ENCODE measurements at regions of chr14 and their contacts with region 1.

Region 1: DNA sequence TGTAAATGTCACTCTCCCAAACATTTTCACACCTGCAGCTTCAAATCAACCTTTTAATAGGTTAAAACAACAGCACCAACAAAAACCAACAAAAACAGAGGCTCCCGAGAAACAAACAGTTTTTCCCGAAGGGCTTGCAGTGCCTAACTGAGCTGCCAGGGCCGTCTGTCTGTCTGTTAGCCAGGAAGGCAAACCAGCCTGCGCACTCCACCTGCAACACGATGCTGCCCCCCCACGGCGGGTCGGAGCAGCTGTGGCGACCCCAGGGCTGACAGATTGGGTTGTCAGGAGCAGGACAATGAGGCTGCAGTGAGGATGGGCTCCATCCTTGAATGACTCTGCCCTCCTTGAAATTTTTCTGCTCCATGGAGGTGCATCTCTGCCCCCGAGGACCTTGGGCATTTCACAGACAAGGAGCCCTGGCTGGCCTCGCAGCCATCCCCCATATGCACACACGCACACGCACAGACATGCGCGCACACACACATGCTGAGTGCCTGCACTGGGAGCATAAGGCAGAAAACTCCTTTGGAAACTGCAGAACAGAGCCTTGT is 2.6 kb downstream of the RTL1 start:
- DNase-seq: peak; percentile 54
- ATAC-seq: no peak
- H3K4me3 Mint-ChIP-seq: no peak overlapping the region
- H3K27ac Mint-ChIP-seq: no peak overlapping the region
- H3K4me1 Mint-ChIP-seq: no peaks in the 10 kb centered on the region
- H3K27me3 Mint-ChIP-seq: peaks cover 48% of the 10 kb centered on the region

Region 2: DNA sequence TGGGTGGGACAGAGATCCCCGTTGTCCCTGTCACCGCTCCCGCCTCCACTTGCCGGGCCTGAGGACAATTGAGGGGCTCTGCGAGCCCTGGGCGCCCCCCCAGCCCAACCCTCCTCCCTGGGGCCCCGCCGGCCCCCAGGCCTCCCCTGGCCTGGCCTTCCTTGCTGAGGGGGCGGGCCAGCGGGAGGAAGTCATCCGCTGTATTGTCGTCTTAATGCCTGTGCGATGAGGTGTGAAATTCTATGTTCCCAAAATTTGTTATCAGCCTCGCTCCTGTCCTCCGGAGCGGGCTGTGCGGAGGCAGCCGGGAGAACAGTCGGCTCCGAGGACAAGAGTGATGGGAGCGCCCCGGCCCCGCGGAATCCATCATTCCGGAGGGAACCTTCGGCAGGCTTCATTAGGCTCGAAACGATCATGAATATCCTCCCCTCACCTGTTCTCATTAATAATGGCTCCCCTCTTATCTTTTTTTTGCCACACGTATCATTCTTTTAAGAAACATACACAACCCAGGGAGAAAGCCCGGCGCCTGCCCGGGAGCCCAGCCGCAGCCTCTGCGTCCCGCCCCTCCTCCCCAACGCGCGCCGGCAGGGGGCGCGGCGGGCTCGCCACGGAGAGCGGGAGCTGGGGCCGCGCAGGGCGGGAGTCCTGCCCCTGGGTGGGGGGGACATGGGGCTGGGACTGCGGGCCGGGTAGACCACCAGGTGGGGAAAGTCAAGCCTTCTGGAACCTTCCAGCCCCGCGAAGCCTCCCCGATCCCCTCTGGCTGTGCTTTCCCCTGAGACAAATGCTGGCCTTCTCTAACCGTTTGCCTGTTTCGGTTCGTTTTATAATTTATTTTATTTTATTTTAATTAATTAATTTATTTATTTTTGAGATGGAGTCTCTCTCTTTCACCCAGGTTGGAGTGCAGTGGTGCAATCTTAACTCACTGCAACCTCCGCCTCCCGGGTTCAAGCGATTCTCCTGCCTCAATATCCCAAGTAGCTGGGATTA is 191.3 kb before region 1 on chr14:
- CTCF ChIA-PET with region 1: no interaction called
- POLR2A ChIA-PET with region 1: no interaction called
- intact Hi-C with region 1: loop called in 1 of 2 experiments (anchors 1 kb)
- DNase-seq: peak; percentile 63
- ATAC-seq: no peak
- H3K4me3 Mint-ChIP-seq: no peak overlapping the region
- H3K27ac Mint-ChIP-seq: no peak overlapping the region
- H3K4me1 Mint-ChIP-seq: no peaks in the 10 kb centered on the region
- H3K27me3 Mint-ChIP-seq: peaks cover 16% of the 10 kb centered on the region

Region 3: DNA sequence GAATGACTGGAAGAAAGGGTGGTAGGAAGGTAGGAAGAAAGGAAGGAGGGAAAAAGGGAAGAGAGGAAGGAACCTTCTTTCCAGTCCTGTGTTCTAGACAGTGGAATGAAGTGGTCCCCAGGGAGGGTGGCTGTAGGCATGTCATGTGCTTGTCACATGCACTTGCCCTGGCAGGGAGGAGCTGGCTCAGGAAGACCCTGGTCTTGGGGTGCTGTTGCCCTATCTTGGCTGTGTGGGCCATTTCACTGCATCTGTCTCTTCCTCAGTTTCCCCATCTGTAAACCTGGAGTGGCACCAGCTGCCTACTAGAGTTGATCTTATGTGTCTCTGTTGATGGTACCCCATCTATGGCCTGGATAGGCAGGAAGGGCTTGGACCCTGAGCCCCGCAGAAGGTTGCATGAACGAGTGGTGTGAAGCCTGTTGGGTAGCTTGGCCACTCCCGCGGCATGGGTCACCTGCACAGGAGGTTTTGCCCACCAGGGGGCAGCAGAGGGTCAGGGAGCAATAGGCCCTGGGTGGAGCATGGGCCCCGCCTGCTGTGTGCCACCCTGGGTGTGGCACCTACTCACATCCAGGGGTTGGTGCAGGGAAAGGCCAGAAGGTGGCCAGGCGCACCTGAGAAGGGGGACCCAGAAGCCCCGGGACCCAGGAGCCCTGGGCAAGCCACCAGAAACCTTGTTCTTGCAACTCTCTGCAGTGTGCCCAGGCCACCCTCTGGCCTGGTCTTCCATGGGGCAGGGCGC is 49.9 kb before region 1 on chr14:
- CTCF ChIA-PET with region 1: no interaction called
- POLR2A ChIA-PET with region 1: no interaction called
- intact Hi-C with region 1: loop called in 1 of 2 experiments (anchors 2 kb)
- DNase-seq: peak; percentile 91
- ATAC-seq: peak; percentile 92
- H3K4me3 Mint-ChIP-seq: no peak overlapping the region
- H3K27ac Mint-ChIP-seq: no peak overlapping the region
- H3K4me1 Mint-ChIP-seq: no peaks in the 10 kb centered on the region
- H3K27me3 Mint-ChIP-seq: no peaks in the 10 kb centered on the region

Region 4: DNA sequence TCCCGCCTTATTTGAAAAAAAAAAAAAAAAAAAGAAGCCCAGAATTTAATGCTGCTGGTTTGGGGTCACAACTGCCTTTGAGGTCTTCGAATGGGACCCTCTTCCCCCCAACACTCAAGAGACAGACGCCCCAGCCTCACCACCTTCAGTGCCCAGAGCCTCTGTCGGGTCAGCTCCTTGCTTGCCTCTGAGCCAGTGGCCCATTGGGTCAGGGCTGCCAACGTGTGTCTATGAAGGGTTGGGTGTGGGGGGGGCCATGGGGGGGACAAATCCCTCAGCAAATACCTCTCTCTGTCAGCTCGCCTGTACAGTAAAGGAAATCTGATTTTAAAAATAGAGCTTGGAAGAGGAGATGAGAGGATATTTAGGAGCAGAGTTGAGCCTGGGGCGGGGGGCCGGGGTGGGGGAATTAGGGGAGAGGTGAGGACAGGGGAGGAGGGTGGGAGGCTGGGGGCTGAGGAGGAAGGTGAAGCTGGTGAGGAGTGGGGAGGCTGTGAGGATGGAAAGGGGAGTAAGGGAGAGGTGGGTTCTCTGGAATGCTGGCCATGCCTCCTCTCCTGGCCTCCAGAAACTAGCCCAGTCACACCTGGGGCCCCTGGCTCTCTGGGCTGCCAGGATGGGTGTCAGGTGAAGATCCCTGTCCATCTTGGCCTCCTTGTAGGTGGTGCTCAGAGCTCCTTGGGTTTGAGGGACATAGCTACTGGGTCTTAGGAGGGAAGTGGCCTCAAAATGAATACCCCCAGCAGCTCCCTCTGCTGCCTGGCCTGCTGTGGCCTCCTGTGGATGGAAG is 10.7 kb before region 1 on chr14:
- CTCF ChIA-PET with region 1: no interaction called
- POLR2A ChIA-PET with region 1: no interaction called
- intact Hi-C with region 1: no loop called
- DNase-seq: no peak
- ATAC-seq: no peak
- H3K4me3 Mint-ChIP-seq: no peak overlapping the region
- H3K27ac Mint-ChIP-seq: no peak overlapping the region
- H3K4me1 Mint-ChIP-seq: no peaks in the 10 kb centered on the region
- H3K27me3 Mint-ChIP-seq: peaks cover 10% of the 10 kb centered on the region

Region 5: GRCh38 chr14:100914546-100915021 is 13.7 kb after region 1 on chr14:
- CTCF ChIA-PET with region 1: no interaction called
- POLR2A ChIA-PET with region 1: no interaction called
- intact Hi-C with region 1: no loop called
- DNase-seq: no peak
- ATAC-seq: no peak
- H3K4me3 Mint-ChIP-seq: no peak overlapping the region
- H3K27ac Mint-ChIP-seq: no peak overlapping the region
- H3K4me1 Mint-ChIP-seq: no peaks in the 10 kb centered on the region
- H3K27me3 Mint-ChIP-seq: peaks cover 10% of the 10 kb centered on the region

Region 6: GRCh38 chr14:101820283-101820798 is 919.4 kb after region 1 on chr14:
- CTCF ChIA-PET with region 1: no interaction called
- POLR2A ChIA-PET with region 1: no interaction called
- intact Hi-C with region 1: no loop called
- DNase-seq: peak; percentile 61
- ATAC-seq: no peak
- H3K4me3 Mint-ChIP-seq: peak overlapping the region; percentile 74
- H3K27ac Mint-ChIP-seq: peak overlapping the region; percentile 97
- H3K4me1 Mint-ChIP-seq: peaks cover 87% of the 10 kb centered on the region
- H3K27me3 Mint-ChIP-seq: no peaks in the 10 kb centered on the region

Measured in activated CD4-positive, alpha-beta T cell treated with anti-CD3 and anti-CD28 coated beads for 36 hours (primary cell).